ENCODE measurements at regions of chr17 and their contacts with region 1.

Region 1: GRCh38 chr17:74790161-74791054 is 14.3 kb upstream of the NAT9 start:
- DNase-seq: peak in 1 of 3 donors; percentile 11
- H3K4me3 ChIP-seq: no peak overlapping the region
- H3K27ac ChIP-seq: no peak overlapping the region
- H3K4me1 ChIP-seq: peaks cover 3 to 34% (median 29%) of the 10 kb centered on the region in 4 experiments
- H3K27me3 ChIP-seq: no peaks in the 10 kb centered on the region

Region 2: DNA sequence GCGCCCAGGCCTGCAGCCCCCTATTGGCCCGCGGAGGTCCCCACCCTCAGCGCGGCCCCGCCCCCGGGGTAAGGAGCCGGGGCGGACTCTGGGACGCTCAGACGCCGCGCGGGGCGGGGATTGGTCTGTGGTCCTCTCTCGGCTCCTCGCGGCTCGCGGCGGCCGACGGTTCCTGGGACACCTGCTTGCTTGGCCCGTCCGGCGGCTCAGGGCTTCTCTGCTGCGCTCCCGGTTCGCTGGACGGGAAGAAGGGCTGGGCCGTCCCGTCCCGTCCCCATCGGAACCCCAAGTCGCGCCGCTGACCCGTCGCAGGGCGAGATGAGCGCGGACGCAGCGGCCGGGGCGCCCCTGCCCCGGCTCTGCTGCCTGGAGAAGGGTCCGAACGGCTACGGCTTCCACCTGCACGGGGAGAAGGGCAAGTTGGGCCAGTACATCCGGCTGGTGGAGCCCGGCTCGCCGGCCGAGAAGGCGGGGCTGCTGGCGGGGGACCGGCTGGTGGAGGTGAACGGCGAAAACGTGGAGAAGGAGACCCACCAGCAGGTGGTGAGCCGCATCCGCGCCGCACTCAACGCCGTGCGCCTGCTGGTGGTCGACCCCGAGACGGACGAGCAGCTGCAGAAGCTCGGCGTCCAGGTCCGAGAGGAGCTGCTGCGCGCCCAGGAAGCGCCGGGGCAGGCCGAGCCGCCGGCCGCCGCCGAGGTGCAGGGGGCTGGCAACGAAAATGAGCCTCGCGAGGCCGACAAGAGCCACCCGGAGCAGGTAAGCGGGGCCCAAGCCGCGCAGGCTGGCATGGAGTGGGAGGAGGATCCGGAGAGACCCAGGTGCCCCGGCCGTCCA is 41.7 kb before region 1 on chr17 and contains the start of gene NHERF1:
- CTCF ChIA-PET with region 1: interaction called, 24 read pairs
- POLR2A ChIA-PET with region 1: no interaction called
- DNase-seq: peak; percentile 90 to 94 (median 94)
- H3K4me3 ChIP-seq: peak within 1 kb of the TSS; percentile 81 to 98 (median 96)
- H3K27ac ChIP-seq: peak within 1 kb of the TSS; percentile 54 to 81
- H3K4me1 ChIP-seq: peaks cover 18 to 84% (median 80%) of the 10 kb centered on the region in 4 experiments
- H3K27me3 ChIP-seq: no peaks in the 10 kb centered on the region

Region 3: DNA sequence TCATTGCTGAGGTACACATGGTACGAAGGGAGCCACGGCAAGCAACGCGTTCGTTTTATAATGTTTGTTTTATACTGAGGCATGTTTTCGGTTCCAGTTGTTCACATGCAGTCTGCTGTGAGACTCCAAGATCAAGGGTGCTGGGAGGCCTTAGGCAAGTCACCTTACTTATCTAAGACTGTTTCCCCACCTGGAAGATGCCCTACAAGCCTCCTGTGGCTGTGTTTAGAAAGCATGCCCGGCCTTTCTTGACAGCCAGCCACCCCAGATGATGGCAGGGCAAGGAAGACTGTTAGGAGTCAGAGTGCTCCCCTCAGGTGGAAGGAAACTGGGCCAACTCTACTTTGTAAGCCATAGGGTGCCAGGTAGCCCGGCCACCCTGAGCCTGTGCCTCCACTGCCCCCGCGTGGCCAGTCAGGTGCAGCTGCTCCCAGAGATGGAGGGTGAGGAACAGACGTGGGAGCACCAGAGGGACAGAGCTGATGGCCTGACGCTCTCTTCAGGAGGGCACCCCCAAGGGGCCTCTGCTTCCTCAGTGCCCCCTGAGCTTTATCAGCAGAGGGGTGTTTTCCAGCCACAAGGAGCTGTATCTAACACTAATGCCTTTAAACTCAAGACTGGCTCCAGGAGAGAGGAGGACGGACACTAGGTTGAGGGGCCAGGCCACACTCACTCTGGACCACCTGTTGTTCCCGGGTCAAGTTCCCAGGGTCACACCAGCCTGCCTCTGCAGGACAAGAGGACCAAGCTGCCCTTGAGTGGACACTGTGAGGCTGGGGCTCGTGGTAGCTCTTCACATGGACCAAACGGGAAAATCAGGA is 19.7 kb before region 1 on chr17:
- CTCF ChIA-PET with region 1: interaction called, 17 read pairs
- POLR2A ChIA-PET with region 1: no interaction called
- DNase-seq: peak; percentile 51 to 72 (median 66)
- H3K4me3 ChIP-seq: no peak overlapping the region
- H3K27ac ChIP-seq: no peak overlapping the region
- H3K4me1 ChIP-seq: peaks cover 4 to 16% (median 8%) of the 10 kb centered on the region in 4 experiments
- H3K27me3 ChIP-seq: no peaks in the 10 kb centered on the region

Region 4: DNA sequence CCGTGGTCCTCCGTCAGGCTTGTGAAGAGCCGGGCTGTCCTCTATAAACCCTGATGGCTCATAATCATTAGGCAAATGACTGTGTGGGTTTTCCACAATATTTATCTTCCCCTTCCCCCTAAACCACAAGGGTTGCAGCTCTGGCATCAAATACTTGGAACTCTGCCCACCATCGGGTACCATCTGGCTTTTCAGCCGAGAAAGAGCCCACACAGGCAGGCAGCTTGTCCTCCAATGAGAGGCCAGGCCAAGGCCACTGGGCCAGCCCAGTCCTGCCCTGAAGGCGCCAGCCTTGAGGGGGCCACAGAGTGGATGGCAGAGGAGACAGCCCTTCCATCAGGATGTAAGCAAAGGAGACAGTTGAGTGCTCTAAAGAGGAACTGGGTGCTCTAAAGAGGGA is 17.5 kb after region 1 on chr17:
- CTCF ChIA-PET with region 1: interaction called, 66 read pairs
- POLR2A ChIA-PET with region 1: no interaction called
- DNase-seq: peak; percentile 33 to 70 (median 69)
- H3K4me3 ChIP-seq: no peak overlapping the region
- H3K27ac ChIP-seq: no peak overlapping the region
- H3K4me1 ChIP-seq: peaks cover 0 to 22% (median 16%) of the 10 kb centered on the region in 4 experiments
- H3K27me3 ChIP-seq: peaks cover 0 to 7% (median 3%) of the 10 kb centered on the region in 5 experiments

Region 5: GRCh38 chr17:74842599-74843351 is 52.4 kb after region 1 on chr17:
- CTCF ChIA-PET with region 1: interaction called, 22 read pairs
- POLR2A ChIA-PET with region 1: no interaction called
- DNase-seq: peak in 2 of 3 donors; percentile 33 to 37
- H3K4me3 ChIP-seq: peak overlapping the region in 6 of 7 experiments; percentile 7 to 57 (median 40)
- H3K27ac ChIP-seq: no peak overlapping the region
- H3K4me1 ChIP-seq: peaks cover 0 to 28% (median 23%) of the 10 kb centered on the region in 4 experiments
- H3K27me3 ChIP-seq: peaks cover 0 to 40% (median 6%) of the 10 kb centered on the region in 5 experiments

Region 6: GRCh38 chr17:74864866-74865395 is 74.5 kb after region 1 on chr17:
- CTCF ChIA-PET with region 1: interaction called, 158 read pairs
- POLR2A ChIA-PET with region 1: no interaction called
- DNase-seq: peak; percentile 55 to 76 (median 66)
- H3K4me3 ChIP-seq: no peak overlapping the region
- H3K27ac ChIP-seq: no peak overlapping the region
- H3K4me1 ChIP-seq: peaks cover 0 to 32% (median 20%) of the 10 kb centered on the region in 4 experiments
- H3K27me3 ChIP-seq: peaks cover 0 to 25% (median 12%) of the 10 kb centered on the region in 5 experiments

Measured in common myeloid progenitor, CD34-positive (primary cell).